T-cell (primary cell): ENCODE measurements at regions of chr1 and their contacts with region 1.

Region 1: DNA sequence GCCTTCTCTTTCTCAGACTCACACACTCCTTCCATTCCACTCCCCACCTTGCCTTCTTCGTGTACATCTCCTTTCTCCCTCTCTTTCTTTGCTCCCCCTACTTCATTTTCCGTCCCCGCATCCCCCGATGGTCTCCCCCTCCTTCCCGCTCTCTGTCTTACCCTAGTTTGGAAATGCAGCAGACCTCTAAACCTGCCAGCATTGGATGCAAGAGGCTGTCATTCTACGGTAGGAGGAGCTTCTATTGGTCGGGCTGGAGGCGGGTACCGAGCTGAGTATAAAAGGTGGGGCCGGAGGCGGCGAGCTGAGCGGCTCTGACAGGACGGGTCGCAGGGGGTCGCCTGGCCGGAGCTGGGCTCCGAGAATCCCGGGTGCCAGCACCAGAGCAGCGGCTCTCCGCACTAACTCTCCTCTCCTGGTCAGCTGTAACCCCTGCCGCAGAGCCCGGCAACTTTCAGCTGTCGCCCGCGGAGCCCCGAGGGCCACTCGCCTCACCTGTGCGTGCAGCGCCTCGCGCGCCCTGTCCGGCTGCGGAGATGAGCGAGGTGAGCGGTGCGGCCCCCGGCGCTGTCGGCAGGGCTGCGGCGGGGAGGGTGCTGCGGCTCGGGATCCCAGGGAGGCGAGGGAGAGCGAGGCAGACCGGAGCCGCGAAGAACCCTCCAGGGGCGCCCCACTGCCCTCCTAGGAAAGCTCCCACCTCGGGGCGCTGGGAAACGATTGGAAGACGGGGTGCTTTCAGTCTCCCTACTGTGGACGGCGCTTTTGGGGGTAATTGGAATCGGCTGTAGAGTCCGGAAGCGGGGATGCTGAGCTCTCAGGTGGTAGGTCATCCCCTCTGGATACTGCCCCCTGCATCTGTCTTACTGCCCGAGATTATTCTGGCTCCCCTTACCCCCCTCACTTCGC is at the start of gene PCP4L1:
- DNase-seq: peak in 23 of 35 experiments; percentile 3 to 37 (median 11)
- ATAC-seq: peak; percentile 76 to 96 (median 82)
- H3K4me3 ChIP-seq: peak within 1 kb of the TSS; percentile 30 to 65
- H3K4me3 Mint-ChIP-seq: peak within 1 kb of the TSS; percentile 57 to 80 (median 63)
- H3K27ac ChIP-seq: no peak within 1 kb of the TSS
- H3K27ac Mint-ChIP-seq: peak within 1 kb of the TSS; percentile 39
- H3K4me1 ChIP-seq: peaks cover 3 to 14% of the 10 kb centered on the region in 2 experiments
- H3K4me1 Mint-ChIP-seq: peaks cover 19 to 25% (median 21%) of the 10 kb centered on the region in 3 donors
- H3K27me3 ChIP-seq: peaks cover 14 to 48% of the 10 kb centered on the region in 2 experiments
- H3K27me3 Mint-ChIP-seq: peaks cover 54 to 57% of the 10 kb centered on the region in 2 donors
- total RNA-seq, gene PCP4L1: not detected

Region 2: DNA sequence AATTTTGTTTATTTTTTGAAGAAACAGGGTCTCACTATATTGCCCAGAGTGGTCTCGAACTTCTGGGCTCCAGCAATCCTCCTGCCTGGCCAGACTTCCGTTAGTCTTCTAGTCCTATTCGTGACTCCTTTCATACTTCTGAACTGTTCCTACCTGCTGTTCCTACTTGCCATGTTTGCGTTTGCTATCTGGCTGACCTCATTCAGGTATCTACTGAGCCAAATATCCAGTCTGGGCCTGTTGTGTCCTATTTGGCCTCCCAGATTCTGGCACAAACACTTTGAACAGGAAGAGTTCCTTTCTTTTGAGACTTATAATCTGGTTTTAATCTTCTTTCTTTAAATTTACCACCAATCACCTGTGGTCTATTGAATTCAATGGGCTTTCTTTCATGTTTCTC is 13.8 kb before region 1 on chr1:
- CTCF ChIA-PET with region 1: interaction called in 1 of 2 experiments, 3 read pairs
- POLR2A ChIA-PET with region 1: interaction called, 6 to 10 read pairs
- DNase-seq: no peak
- ATAC-seq: no peak
- H3K4me3 ChIP-seq: no peak overlapping the region
- H3K4me3 Mint-ChIP-seq: no peak overlapping the region
- H3K27ac ChIP-seq: no peak overlapping the region
- H3K27ac Mint-ChIP-seq: no peak overlapping the region
- H3K4me1 ChIP-seq: no peaks in the 10 kb centered on the region
- H3K4me1 Mint-ChIP-seq: no peaks in the 10 kb centered on the region
- H3K27me3 ChIP-seq: peaks cover 0 to 3% of the 10 kb centered on the region in 2 experiments
- H3K27me3 Mint-ChIP-seq: peaks cover 2 to 12% of the 10 kb centered on the region in 2 donors

Region 3: DNA sequence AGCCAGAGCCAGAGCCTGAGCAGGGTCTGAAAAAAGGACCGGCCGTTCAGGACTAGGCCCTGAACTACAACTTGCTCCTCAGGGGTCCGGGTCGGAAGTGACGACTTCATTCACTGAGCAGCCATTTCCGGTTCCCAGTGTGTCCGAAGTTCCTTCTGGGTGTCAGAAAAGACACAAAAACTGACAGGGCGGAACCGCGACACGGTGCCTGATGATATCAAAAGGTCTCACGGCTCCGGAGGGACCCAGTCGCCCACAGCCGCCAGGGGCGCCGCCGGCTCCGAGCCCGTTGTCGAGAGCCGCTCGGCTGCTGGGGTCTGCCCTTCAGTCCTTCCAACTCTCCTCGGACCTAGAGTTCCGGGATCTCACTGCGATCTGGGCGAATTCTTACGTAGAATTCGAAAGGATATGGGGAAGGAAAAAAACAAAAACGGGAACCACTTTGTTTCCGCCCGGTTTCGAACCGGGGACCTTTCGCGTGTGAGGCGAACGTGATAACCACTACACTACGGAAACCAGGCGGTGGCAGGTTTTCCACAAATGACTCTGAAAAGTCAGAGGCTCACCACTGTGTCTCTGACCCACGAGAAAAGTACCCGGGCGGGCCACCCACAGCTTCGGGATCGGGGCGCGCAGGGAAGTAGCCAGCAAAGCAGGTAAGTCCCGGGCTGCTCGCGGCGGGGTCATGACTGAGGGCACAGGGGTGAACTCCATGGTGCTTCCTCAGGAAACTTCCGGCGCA is 140.7 kb after region 1 on chr1:
- CTCF ChIA-PET with region 1: no interaction called
- POLR2A ChIA-PET with region 1: interaction called in 1 of 2 experiments, 11 read pairs
- DNase-seq: peak; percentile 79 to 97 (median 88)
- ATAC-seq: peak; percentile 80 to 84 (median 82)
- H3K4me3 ChIP-seq: peak overlapping the region; percentile 71 to 98
- H3K4me3 Mint-ChIP-seq: peak overlapping the region; percentile 91 to 99 (median 97)
- H3K27ac ChIP-seq: peak overlapping the region; percentile 97
- H3K27ac Mint-ChIP-seq: peak overlapping the region; percentile 99 to 100
- H3K4me1 ChIP-seq: peaks cover 0 to 23% of the 10 kb centered on the region in 2 experiments
- H3K4me1 Mint-ChIP-seq: peaks cover 38 to 44% (median 38%) of the 10 kb centered on the region in 3 donors
- H3K27me3 ChIP-seq: peaks cover 0 to 4% of the 10 kb centered on the region in 2 experiments
- H3K27me3 Mint-ChIP-seq: peaks cover 6 to 8% of the 10 kb centered on the region in 2 donors